ENCODE measurements at regions of chr5 and their contacts with region 1.

Region 1: GRCh38 chr5:151825445-151825844 is 53.7 kb downstream of the G3BP1 start:
- DNase-seq: peak in 1 of 3 donors; percentile 21
- ATAC-seq: peak; percentile 81 to 90
- H3K4me3 ChIP-seq: no peak overlapping the region
- H3K27ac ChIP-seq: no peak overlapping the region
- H3K4me1 ChIP-seq: no peaks in the 10 kb centered on the region
- H3K27me3 ChIP-seq: no peaks in the 10 kb centered on the region

Region 2: GRCh38 chr5:151270599-151270998 is 554.8 kb before region 1 on chr5:
- intact Hi-C with region 1: no loop called
- DNase-seq: no peak
- ATAC-seq: no peak
- H3K4me3 ChIP-seq: no peak overlapping the region
- H3K27ac ChIP-seq: no peak overlapping the region
- H3K4me1 ChIP-seq: no peaks in the 10 kb centered on the region
- H3K27me3 ChIP-seq: no peaks in the 10 kb centered on the region

Region 3: DNA sequence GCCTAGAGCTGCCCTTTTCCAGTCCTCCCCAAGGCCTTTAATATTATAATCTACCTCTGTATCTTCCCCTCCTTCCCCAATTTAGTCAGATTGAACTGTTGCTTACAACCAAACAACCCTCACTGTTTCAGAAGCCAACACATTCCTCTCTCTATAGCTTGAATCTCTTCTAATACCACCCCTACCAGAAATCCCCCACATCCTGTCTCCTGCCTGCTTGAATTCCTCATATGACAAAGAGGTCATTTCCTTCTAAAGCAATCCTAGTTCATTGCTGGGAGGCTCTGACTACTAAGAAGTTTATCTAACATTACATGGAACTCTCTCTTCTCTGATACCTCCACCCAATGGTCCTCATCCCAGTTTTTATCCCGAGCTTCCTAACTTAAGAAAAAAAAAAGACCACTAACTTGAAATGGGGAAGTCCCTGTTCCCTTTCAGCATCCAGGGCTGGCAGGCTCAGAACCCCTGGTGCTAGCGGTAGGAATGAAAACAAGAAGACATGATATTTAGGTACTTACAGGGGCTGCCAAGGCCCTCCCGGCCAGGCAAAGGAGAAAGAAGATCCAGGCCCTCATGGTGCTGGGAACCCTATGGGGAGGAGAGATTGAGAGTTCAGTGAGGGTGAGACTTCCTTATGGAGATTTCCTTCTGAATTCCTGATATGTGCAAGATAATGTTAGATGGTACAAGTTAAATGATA is 149.7 kb before region 1 on chr5:
- intact Hi-C with region 1: no loop called
- DNase-seq: no peak
- ATAC-seq: peak in 1 of 2 donors; percentile 43
- H3K4me3 ChIP-seq: no peak overlapping the region
- H3K27ac ChIP-seq: peak overlapping the region; percentile 98
- H3K4me1 ChIP-seq: peaks cover 48% of the 10 kb centered on the region
- H3K27me3 ChIP-seq: no peaks in the 10 kb centered on the region

Region 4: GRCh38 chr5:152007585-152008335 is 182.3 kb after region 1 on chr5:
- intact Hi-C with region 1: no loop called
- DNase-seq: no peak
- ATAC-seq: no peak
- H3K4me3 ChIP-seq: no peak overlapping the region
- H3K27ac ChIP-seq: no peak overlapping the region
- H3K4me1 ChIP-seq: no peaks in the 10 kb centered on the region
- H3K27me3 ChIP-seq: no peaks in the 10 kb centered on the region

Region 5: DNA sequence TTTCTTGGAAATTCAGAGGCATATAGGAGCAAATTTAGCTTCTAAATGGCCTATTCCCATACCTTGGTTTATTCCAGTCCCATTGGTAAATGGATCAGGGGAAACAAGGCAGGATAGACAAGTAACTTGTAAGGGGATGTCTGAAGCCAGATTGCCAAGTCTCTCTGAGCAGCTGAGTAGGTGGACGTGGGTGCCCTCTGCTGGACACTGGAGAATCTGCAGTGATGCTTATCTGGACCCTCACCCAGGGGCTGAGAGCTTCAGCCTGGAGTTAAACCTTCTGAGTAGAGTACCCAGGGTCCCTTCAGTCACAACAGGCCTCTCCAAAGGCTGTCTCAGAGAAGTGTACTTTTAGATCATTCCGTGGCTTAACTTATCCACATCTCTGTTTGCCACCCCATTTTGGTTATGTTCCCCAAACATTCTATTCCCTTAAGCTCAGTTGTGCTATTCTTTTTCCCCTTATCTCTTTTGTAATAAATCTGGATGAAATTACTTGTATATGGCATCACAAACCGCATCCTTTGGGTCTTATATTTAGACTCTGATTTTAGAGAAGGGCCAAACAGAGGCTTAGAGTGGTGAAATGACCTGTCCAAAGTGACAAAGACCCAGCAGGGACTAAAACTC is 317.5 kb after region 1 on chr5:
- intact Hi-C with region 1: loop called (anchors 2 to 5 kb)
- DNase-seq: peak; percentile 44 to 82 (median 59)
- ATAC-seq: peak; percentile 68 to 79
- H3K4me3 ChIP-seq: no peak overlapping the region
- H3K27ac ChIP-seq: no peak overlapping the region
- H3K4me1 ChIP-seq: no peaks in the 10 kb centered on the region
- H3K27me3 ChIP-seq: no peaks in the 10 kb centered on the region

Region 6: DNA sequence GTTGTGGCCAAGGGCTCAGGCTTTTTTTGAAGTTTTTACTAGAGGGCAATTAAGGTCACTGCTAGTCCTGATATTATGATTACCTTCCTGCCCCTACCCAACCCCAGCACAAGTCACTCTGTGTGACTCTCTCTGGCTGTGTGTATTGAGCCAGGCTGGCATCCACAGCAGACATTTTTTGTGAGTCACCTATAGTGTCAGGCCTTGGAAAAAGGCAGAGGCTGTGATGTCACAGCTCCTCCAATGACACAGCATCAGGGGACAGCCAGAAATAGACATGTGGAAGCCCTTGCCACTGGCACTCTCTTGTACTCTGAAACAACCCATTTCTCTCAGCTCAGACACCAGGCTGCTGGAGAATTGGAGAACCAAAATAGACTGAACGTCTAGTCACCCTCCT is 434.3 kb after region 1 on chr5:
- intact Hi-C with region 1: loop called in 3 of 4 experiments (anchors 10 kb)
- DNase-seq: peak in 1 of 3 donors; percentile 12
- ATAC-seq: peak; percentile 45 to 86
- H3K4me3 ChIP-seq: no peak overlapping the region
- H3K27ac ChIP-seq: peak overlapping the region; percentile 46
- H3K4me1 ChIP-seq: no peaks in the 10 kb centered on the region
- H3K27me3 ChIP-seq: no peaks in the 10 kb centered on the region

Region 7: DNA sequence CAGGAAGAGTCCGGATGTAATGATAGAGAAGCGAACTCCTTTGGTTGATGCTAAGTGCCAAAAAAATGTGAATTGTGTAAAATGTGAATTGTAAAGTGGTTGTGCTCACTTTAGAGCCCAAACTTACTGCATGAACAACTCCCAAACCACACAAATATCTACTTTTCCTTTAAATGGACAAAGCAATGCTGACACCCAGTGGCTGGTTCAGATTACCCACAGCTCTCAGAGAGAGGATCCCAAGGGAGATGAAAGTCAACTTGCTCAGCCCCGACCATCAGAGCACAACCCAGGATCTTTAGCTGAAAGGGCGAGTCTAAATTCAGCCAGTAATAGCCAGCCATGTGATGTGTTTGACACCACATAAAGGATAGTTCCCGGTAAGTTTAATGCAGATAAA is 446.0 kb after region 1 on chr5:
- intact Hi-C with region 1: loop called (anchors 10 kb)
- DNase-seq: peak in 2 of 3 donors; percentile 25 to 43
- ATAC-seq: peak; percentile 63 to 74
- H3K4me3 ChIP-seq: no peak overlapping the region
- H3K27ac ChIP-seq: no peak overlapping the region
- H3K4me1 ChIP-seq: peaks cover 2% of the 10 kb centered on the region
- H3K27me3 ChIP-seq: no peaks in the 10 kb centered on the region

Region 8: GRCh38 chr5:152505442-152506042 is 680.1 kb after region 1 on chr5:
- intact Hi-C with region 1: loop called (anchors 5 to 10 kb)
- DNase-seq: peak in 2 of 3 donors; percentile 54 to 61
- ATAC-seq: peak; percentile 62 to 78
- H3K4me3 ChIP-seq: no peak overlapping the region
- H3K27ac ChIP-seq: no peak overlapping the region
- H3K4me1 ChIP-seq: no peaks in the 10 kb centered on the region
- H3K27me3 ChIP-seq: no peaks in the 10 kb centered on the region

Region 9: GRCh38 chr5:152514827-152515397 is 689.5 kb after region 1 on chr5:
- intact Hi-C with region 1: loop called in 1 of 4 experiments (anchors 5 kb)
- DNase-seq: no peak
- ATAC-seq: no peak
- H3K4me3 ChIP-seq: no peak overlapping the region
- H3K27ac ChIP-seq: no peak overlapping the region
- H3K4me1 ChIP-seq: no peaks in the 10 kb centered on the region
- H3K27me3 ChIP-seq: no peaks in the 10 kb centered on the region